CD8-positive, alpha-beta T cell (primary cell): ENCODE measurements at regions of chr7 and their contacts with region 1.

Region 1: DNA sequence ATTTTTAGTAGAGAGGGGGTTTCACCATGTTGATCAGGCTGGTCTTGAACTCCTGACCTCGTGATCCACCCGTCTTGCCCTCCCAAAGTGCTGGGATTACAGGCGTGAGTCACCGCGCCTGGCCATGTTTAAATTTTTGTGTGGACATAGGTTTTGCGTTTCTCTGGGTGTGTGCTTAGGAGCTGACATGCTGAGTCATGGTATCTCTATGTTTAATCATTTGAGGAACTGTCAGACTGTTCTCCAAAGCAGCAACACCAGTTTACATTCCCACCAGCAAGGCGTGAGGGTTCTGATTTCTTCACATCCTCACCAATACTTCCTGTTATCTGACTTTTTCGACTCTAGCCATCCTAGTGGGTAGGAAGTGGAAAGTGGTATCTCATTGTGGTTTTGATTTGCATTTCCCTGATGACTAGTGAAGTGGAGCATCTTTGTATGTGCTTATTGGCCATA is 153.7 kb downstream of the DNAJB6 start:
- DNase-seq: peak in 7 of 9 experiments; percentile 30 to 88 (median 54)
- ATAC-seq: peak; percentile 89
- H3K4me3 ChIP-seq: no peak overlapping the region
- H3K4me3 Mint-ChIP-seq: peak overlapping the region; percentile 27
- H3K27ac ChIP-seq: no peak overlapping the region
- H3K27ac Mint-ChIP-seq: peak overlapping the region; percentile 84
- H3K4me1 ChIP-seq: peaks cover 21% of the 10 kb centered on the region
- H3K4me1 Mint-ChIP-seq: peaks cover 29% of the 10 kb centered on the region
- H3K27me3 ChIP-seq: peaks cover 0 to 3% of the 10 kb centered on the region in 2 experiments
- H3K27me3 Mint-ChIP-seq: no peaks in the 10 kb centered on the region
- CTCF ChIP-seq: no peak

Region 2: DNA sequence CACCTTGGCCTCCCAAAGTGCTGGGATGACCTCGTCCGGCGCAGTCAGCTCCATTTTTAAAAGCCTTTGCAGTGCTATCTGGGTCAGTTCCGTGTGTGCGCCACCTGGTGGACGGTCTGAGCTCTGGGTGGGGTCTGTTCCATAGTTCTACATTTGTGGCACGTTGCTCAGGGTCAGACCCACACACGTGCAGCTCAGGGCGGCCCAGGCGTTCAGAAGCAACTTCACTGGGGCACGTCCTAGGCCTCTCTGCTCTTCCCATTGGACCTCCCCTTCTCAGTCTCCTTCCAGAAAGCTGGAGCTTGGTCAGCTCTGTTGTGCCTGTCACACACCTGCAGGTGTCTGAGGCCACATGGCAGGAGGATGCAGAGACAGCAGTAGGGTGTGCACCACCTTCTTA is 15.8 kb before region 1 on chr7:
- CTCF ChIA-PET with region 1: interaction called, 4 read pairs
- POLR2A ChIA-PET with region 1: interaction called, 10 read pairs
- intact Hi-C with region 1: loop called in 1 of 2 experiments (anchors 1 kb)
- DNase-seq: peak in 4 of 9 experiments; percentile 31 to 57 (median 44)
- ATAC-seq: no peak
- H3K4me3 ChIP-seq: no peak overlapping the region
- H3K4me3 Mint-ChIP-seq: no peak overlapping the region
- H3K27ac ChIP-seq: no peak overlapping the region
- H3K27ac Mint-ChIP-seq: no peak overlapping the region
- H3K4me1 ChIP-seq: peaks cover 40% of the 10 kb centered on the region
- H3K4me1 Mint-ChIP-seq: peaks cover 54% of the 10 kb centered on the region
- H3K27me3 ChIP-seq: no peaks in the 10 kb centered on the region
- H3K27me3 Mint-ChIP-seq: no peaks in the 10 kb centered on the region
- CTCF ChIP-seq: no peak

Region 3: DNA sequence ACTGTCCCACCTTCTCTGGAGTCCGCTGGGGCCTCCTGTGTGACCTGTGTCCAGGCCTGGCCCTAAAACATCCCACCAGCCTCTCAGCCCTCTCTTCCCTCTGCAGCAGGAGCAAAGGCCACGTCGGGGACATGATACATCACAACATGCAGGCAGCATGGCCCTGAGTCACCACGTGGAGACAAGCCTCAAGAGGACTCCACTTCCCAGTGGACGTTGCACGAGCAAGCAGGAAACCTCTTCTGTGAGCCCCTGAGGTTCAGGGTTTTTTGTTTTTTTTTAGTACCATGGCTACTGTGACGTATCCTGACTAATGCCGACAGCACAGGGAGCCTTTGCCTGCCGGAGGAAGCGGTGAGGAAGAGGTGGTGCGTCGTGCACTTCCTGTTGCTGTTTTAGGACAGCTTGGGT is 12.2 kb after region 1 on chr7:
- CTCF ChIA-PET with region 1: interaction called, 3 read pairs
- POLR2A ChIA-PET with region 1: no interaction called
- intact Hi-C with region 1: loop called in 1 of 2 experiments (anchors 1 kb)
- DNase-seq: peak; percentile 45 to 93 (median 70)
- ATAC-seq: peak; percentile 95
- H3K4me3 ChIP-seq: peak overlapping the region; percentile 15 to 22
- H3K4me3 Mint-ChIP-seq: peak overlapping the region; percentile 79
- H3K27ac ChIP-seq: peak overlapping the region; percentile 50 to 53
- H3K27ac Mint-ChIP-seq: peak overlapping the region; percentile 92
- H3K4me1 ChIP-seq: peaks cover 22% of the 10 kb centered on the region
- H3K4me1 Mint-ChIP-seq: peaks cover 25% of the 10 kb centered on the region
- H3K27me3 ChIP-seq: no peaks in the 10 kb centered on the region
- H3K27me3 Mint-ChIP-seq: peaks cover 8% of the 10 kb centered on the region
- CTCF ChIP-seq: no peak

Region 4: DNA sequence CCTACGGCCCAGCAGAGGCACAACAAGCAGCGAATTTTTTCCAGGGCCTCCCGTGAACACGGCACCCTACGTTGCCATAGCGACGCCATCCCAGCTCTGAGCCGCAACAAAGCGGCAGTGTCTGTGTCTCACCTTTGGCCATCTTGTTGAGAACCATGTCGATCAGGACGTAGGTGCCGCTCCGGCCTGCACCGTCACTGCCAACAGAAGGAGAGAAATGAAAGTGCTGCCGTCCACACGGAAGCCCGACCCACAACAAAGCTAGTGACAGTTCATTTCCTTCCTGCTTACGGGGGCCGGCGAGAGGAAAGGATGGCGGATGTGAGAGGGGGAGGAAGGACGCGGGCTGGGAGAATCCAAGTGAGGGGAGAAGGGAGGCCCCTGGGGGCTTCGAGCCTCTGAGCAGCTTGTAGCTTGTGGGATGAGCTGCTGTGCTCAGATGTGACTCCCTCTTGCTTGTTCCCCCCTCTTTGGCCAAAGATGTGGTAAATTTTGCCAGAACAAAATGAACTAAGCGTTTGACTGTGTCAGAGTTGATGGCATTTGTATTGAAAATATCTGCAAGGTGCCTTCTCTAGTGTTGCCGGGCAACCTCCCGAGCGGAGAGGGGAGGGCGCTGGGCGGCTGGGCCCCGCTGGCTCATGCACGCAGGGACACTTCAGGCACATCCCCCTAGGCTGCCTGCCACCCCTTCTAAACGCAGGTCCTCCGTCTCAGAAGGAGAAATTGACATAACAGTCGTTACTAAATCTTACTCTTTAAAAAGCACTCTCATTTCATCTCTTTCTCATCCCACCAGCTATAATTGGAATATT is 78.5 kb after region 1 on chr7:
- CTCF ChIA-PET with region 1: no interaction called
- POLR2A ChIA-PET with region 1: no interaction called
- intact Hi-C with region 1: loop called in 1 of 2 experiments (anchors 5 kb)
- DNase-seq: peak; percentile 26 to 83 (median 62)
- ATAC-seq: peak; percentile 80
- H3K4me3 ChIP-seq: peak overlapping the region; percentile 40 to 52
- H3K4me3 Mint-ChIP-seq: peak overlapping the region; percentile 89
- H3K27ac ChIP-seq: peak overlapping the region in 1 of 2 experiments; percentile 20
- H3K27ac Mint-ChIP-seq: peak overlapping the region; percentile 79
- H3K4me1 ChIP-seq: peaks cover 16% of the 10 kb centered on the region
- H3K4me1 Mint-ChIP-seq: peaks cover 22% of the 10 kb centered on the region
- H3K27me3 ChIP-seq: peaks cover 0 to 6% of the 10 kb centered on the region in 2 experiments
- H3K27me3 Mint-ChIP-seq: peaks cover 2% of the 10 kb centered on the region
- CTCF ChIP-seq: no peak